Activated CD4-positive, alpha-beta memory T cell treated with anti-CD3 and anti-CD28 coated beads for 36 hours (primary cell): ENCODE measurements at regions of chr15 and their contacts with region 1.

Region 1: GRCh38 chr15:82809404-82810060 is at the start of gene WHAMM:
- DNase-seq: peak; percentile 97
- H3K4me3 Mint-ChIP-seq: peak within 1 kb of the TSS; percentile 82
- H3K27ac Mint-ChIP-seq: peak within 1 kb of the TSS; percentile 81
- H3K4me1 Mint-ChIP-seq: peaks cover 41% of the 10 kb centered on the region
- H3K27me3 Mint-ChIP-seq: no peaks in the 10 kb centered on the region
- total RNA-seq, gene WHAMM: 4.2 to 5.3 TPM

Region 2: DNA sequence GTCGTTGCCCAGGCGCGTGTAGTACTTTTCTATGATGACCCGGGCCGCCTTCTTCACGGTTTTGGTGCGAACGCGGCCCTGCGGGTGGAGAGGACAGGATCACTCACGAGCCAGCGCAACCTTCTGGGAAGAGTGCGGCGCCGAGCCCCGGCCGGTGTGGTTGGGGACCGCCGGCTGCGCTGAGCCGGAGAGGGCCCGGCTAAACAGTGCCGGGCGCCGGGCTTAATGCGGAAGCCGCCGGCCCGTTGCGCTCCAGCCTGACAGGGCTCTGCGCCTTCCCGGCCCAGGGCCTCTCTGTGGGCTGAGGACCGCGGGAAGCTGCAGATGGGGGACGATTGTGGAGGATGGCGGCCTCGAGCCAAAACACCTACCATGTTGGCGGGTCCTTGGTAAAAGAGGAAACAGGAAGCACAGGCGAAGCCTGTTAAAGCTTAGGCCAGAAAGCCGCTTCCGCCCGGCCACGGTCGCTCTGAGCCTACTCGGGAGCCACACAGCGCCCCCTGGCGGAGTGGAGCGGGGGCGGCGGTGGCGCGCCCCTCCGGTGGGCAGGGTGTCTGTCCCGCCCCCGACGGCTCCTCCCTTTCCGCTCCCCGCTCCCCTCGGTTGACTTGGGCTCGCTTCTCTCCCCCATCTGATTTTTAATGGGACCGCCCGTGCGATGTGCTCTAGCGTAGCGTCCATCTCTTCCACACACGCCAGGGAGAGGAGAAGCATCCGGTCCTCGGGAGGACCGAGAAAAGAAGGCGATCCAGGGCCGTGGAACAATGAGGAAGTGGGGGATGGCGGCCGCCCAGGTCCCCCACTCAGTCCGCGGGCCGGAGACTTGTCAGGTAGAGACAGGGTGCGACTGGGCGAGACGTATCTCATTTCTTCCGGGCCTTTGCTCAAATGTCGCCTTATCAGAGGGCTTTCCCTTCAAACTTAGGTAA is 269.2 kb before region 1 on chr15 and contains the start of gene RPS17:
- CTCF ChIA-PET with region 1: interaction called, 3 read pairs
- POLR2A ChIA-PET with region 1: interaction called, 6 read pairs
- intact Hi-C with region 1: loop called (anchors 2 kb)
- DNase-seq: peak; percentile 98
- H3K4me3 Mint-ChIP-seq: peak within 1 kb of the TSS; percentile 98
- H3K27ac Mint-ChIP-seq: peak within 1 kb of the TSS; percentile 88
- H3K4me1 Mint-ChIP-seq: peaks cover 27% of the 10 kb centered on the region
- H3K27me3 Mint-ChIP-seq: peaks cover 2% of the 10 kb centered on the region
- total RNA-seq, gene RPS17: 2,581 to 2,594 TPM

Region 3: GRCh38 chr15:82832601-82833361 is 23.2 kb after region 1 on chr15:
- CTCF ChIA-PET with region 1: interaction called, 6 read pairs
- POLR2A ChIA-PET with region 1: interaction called, 19 read pairs
- intact Hi-C with region 1: loop called (anchors 1 kb)
- DNase-seq: peak; percentile 67
- H3K4me3 Mint-ChIP-seq: no peak overlapping the region
- H3K27ac Mint-ChIP-seq: peak overlapping the region; percentile 50
- H3K4me1 Mint-ChIP-seq: peaks cover 28% of the 10 kb centered on the region
- H3K27me3 Mint-ChIP-seq: no peaks in the 10 kb centered on the region

Region 4: GRCh38 chr15:82985688-82986441 is 176.3 kb after region 1 on chr15 and contains the start of gene RAMAC:
- CTCF ChIA-PET with region 1: no interaction called
- POLR2A ChIA-PET with region 1: interaction called, 9 read pairs
- intact Hi-C with region 1: loop called (anchors 2 kb)
- DNase-seq: peak; percentile 95
- H3K4me3 Mint-ChIP-seq: peak within 1 kb of the TSS; percentile 98
- H3K27ac Mint-ChIP-seq: peak within 1 kb of the TSS; percentile 96
- H3K4me1 Mint-ChIP-seq: peaks cover 18% of the 10 kb centered on the region
- H3K27me3 Mint-ChIP-seq: no peaks in the 10 kb centered on the region
- total RNA-seq, gene RAMAC: 19.0 to 20.2 TPM

Region 5: GRCh38 chr15:83207622-83208411 is 398.3 kb after region 1 on chr15 and contains the start of gene HDGFL3:
- CTCF ChIA-PET with region 1: no interaction called
- POLR2A ChIA-PET with region 1: no interaction called
- intact Hi-C with region 1: loop called (anchors 10 kb)
- DNase-seq: peak; percentile 28
- H3K4me3 Mint-ChIP-seq: peak within 1 kb of the TSS; percentile 77
- H3K27ac Mint-ChIP-seq: no peak within 1 kb of the TSS
- H3K4me1 Mint-ChIP-seq: peaks cover 4% of the 10 kb centered on the region
- H3K27me3 Mint-ChIP-seq: peaks cover 18% of the 10 kb centered on the region
- total RNA-seq, gene HDGFL3: 7.1 to 8.0 TPM